ENCODE measurements at regions of chr19 and their contacts with region 1.

Region 1: DNA sequence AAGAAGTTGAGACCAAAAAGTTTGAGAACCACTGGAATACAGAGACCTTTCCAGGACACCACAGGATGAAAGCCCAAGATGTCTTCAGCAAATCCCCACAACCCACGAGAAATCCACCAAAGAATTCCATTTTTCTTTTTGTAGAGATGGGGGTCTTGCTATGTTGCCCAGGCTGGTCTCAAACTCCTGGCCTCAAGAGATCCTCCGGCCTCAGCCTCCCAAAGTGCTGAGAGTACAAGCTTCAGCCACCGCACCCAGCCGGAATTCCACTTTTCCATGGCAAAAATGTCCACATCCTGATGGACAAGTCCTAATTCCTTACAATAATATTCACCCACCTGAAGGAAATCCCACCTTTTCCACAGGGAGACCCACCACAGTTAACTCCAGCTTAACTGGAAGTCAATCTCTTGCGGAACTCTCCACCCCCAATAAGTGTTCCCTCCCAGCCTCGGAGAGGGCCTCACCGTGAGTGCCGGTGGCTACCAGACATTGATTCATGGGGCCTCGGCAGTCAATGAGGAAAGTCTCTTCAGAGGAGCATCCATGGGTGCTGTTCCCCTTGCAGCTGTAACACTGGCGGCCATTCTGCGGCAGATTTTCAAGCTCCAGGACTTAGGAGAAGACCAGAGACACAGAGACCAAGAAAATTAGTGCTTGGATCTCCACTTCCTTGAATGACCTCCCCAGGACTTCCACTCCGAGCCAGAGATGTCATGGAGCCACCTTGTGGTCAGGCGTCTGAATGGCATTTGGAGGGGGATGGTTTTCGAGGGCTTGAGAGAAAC is 12.3 kb upstream of the CADM4 start:
- DNase-seq: peak; percentile 56 to 78 (median 70)
- ATAC-seq: peak; percentile 91 to 98 (median 97)
- H3K4me3 ChIP-seq: peak overlapping the region; percentile 9 to 52 (median 24)
- H3K27ac ChIP-seq: peak overlapping the region; percentile 6 to 55 (median 34)
- H3K4me1 ChIP-seq: peaks cover 0 to 7% (median 6%) of the 10 kb centered on the region in 3 donors
- H3K27me3 ChIP-seq: no peaks in the 10 kb centered on the region
- CTCF ChIP-seq: peak; percentile 62 to 71 (median 64)

Region 2: GRCh38 chr19:43446746-43447489 is 205.0 kb before region 1 on chr19:
- intact Hi-C with region 1: loop called in 1 of 3 experiments (anchors 10 kb)
- DNase-seq: peak; percentile 55 to 90 (median 80)
- ATAC-seq: peak; percentile 90 to 98 (median 95)
- H3K4me3 ChIP-seq: no peak overlapping the region
- H3K27ac ChIP-seq: no peak overlapping the region
- H3K4me1 ChIP-seq: no peaks in the 10 kb centered on the region
- H3K27me3 ChIP-seq: no peaks in the 10 kb centered on the region
- CTCF ChIP-seq: peak; percentile 87 to 96 (median 92)

Region 3: DNA sequence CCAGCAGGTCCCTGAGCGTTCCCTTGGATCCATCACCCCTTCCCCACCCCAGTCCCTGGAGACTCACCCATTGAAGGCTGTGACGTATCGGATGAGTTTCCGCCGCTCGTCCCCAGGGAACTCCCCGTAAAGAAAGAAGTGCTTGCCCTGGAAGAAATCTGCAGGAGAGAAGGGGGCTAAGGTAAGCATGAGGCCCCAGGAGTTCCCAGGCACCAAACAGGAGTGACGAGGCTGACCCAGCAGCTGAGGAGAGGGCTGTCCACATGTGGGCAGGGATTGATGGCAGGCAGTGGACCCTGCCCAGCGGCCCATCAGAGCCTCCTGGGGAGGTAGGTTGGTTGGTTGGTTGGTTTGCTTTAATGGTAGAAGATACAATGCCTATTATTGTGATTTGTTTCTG is 107.9 kb before region 1 on chr19:
- intact Hi-C with region 1: loop called in 1 of 3 experiments (anchors 5 kb)
- DNase-seq: no peak
- ATAC-seq: no peak
- H3K4me3 ChIP-seq: no peak overlapping the region
- H3K27ac ChIP-seq: no peak overlapping the region
- H3K4me1 ChIP-seq: no peaks in the 10 kb centered on the region
- H3K27me3 ChIP-seq: no peaks in the 10 kb centered on the region
- CTCF ChIP-seq: no peak

Measured in pancreas (tissue), 10 donors.